ENCODE measurements at regions of chr10 and their contacts with region 1.

Region 1: DNA sequence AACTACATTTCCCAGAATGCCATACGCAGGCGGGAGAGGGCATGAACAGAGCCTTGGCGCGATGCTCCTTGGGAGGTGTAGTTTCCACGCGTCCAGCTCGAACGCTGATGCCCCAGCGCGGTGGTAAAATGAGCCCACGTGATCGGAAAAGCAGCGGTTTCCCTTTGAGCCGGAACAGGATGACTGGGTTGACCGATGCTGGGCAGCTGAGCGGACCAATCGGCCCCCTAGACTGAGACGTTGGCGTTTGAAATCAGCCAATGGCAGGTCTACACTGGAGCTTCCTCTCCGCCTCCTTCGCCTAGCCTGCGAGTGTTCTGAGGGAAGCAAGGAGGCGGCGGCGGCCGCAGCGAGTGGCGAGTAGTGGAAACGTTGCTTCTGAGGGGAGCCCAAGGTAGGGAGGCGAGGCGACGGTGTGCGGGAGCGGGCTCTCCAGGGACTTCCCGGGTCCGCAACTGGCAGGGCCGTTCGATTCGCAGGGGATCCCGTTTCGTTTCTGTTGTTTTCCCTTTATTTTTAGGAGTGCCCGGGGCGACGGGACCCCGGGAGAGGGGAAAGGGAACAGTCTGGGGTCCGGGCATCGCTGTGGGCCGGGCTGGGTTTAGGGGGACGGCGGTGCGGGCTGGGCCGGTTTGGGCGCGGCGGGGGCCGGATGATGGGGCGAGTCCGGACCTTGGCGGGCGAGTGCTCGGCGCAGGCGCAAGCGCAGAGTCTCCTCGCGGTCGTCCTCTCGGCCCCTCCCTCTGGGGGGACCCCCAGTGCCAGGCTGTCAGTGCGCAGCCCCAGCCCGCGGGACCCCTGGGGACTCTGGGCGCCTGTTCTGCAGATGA is at the start of gene BUB3:
- DNase-seq: peak; percentile 85 to 99 (median 94)
- ATAC-seq: peak; percentile 87
- H3K4me3 ChIP-seq: peak within 1 kb of the TSS; percentile 81 to 98
- H3K4me3 Mint-ChIP-seq: peak within 1 kb of the TSS; percentile 100
- H3K27ac ChIP-seq: peak within 1 kb of the TSS; percentile 74 to 91
- H3K27ac Mint-ChIP-seq: peak within 1 kb of the TSS; percentile 99
- H3K4me1 ChIP-seq: peaks cover 71% of the 10 kb centered on the region
- H3K4me1 Mint-ChIP-seq: peaks cover 73% of the 10 kb centered on the region
- H3K27me3 ChIP-seq: peaks cover 7 to 22% of the 10 kb centered on the region in 2 experiments
- H3K27me3 Mint-ChIP-seq: peaks cover 11% of the 10 kb centered on the region
- CTCF ChIP-seq: no peak
- total RNA-seq, gene BUB3: 166 to 167 TPM

Region 2: GRCh38 chr10:122374237-122374869 is 780.0 kb before region 1 on chr10 and contains the start of gene PLEKHA1:
- CTCF ChIA-PET with region 1: no interaction called
- POLR2A ChIA-PET with region 1: no interaction called
- intact Hi-C with region 1: loop called (anchors 5 kb)
- DNase-seq: peak; percentile 88 to 96 (median 92)
- ATAC-seq: peak; percentile 89
- H3K4me3 ChIP-seq: peak within 1 kb of the TSS; percentile 93 to 96
- H3K4me3 Mint-ChIP-seq: peak within 1 kb of the TSS; percentile 93
- H3K27ac ChIP-seq: peak within 1 kb of the TSS; percentile 80 to 92
- H3K27ac Mint-ChIP-seq: peak within 1 kb of the TSS; percentile 96
- H3K4me1 ChIP-seq: peaks cover 24% of the 10 kb centered on the region
- H3K4me1 Mint-ChIP-seq: peaks cover 35% of the 10 kb centered on the region
- H3K27me3 ChIP-seq: no peaks in the 10 kb centered on the region
- H3K27me3 Mint-ChIP-seq: peaks cover 2% of the 10 kb centered on the region
- CTCF ChIP-seq: no peak
- total RNA-seq, gene PLEKHA1: 23.6 to 24.6 TPM

Region 3: GRCh38 chr10:122980209-122981065 is 173.9 kb before region 1 on chr10 and contains the start of gene PSTK:
- CTCF ChIA-PET with region 1: interaction called, 4 read pairs
- POLR2A ChIA-PET with region 1: interaction called, 3 read pairs
- intact Hi-C with region 1: loop called in 1 of 2 experiments (anchors 1 kb)
- DNase-seq: peak; percentile 78 to 96 (median 86)
- ATAC-seq: peak; percentile 96
- H3K4me3 ChIP-seq: peak within 1 kb of the TSS; percentile 86 to 93
- H3K4me3 Mint-ChIP-seq: peak within 1 kb of the TSS; percentile 95
- H3K27ac ChIP-seq: peak within 1 kb of the TSS; percentile 96 to 97
- H3K27ac Mint-ChIP-seq: peak within 1 kb of the TSS; percentile 98
- H3K4me1 ChIP-seq: peaks cover 12% of the 10 kb centered on the region
- H3K4me1 Mint-ChIP-seq: peaks cover 19% of the 10 kb centered on the region
- H3K27me3 ChIP-seq: no peaks in the 10 kb centered on the region
- H3K27me3 Mint-ChIP-seq: peaks cover 4% of the 10 kb centered on the region
- CTCF ChIP-seq: peak; percentile 91
- total RNA-seq, gene PSTK: 20.5 to 20.9 TPM

Region 4: DNA sequence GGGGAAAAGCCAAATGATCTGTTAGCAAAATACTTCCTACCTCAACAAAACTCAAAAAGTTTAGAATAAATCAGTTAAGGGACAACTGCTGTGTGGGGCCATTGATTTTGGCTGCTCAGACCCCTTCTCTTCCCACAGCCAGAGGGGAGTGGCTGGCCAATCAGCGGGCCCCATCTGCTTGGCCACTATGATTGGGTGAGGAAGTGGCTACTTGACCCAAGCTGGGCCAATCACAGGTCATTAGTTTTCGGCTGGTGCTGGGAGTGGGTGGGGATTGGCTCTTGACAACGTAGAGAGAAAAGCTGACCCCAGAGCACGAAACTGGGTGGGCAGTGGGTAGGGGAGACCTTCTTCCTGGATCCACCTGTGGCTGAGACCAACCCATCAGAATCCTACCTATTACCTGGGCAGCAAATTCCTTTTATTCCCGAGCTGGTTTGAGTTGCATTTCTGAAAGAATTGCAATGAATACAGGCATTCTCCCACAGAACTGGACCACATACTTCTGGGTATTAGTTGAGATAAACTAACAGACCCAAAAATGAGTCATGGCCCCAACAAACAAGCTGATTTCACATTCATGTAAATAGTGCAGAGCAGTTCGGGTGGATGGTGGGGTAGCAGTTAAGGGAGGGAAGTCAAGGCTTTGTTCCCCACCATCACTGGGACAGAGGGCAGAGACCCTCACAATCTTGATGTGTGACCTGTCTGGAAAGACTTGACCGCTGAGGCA is 54.1 kb before region 1 on chr10:
- CTCF ChIA-PET with region 1: no interaction called
- POLR2A ChIA-PET with region 1: no interaction called
- intact Hi-C with region 1: no loop called
- DNase-seq: no peak
- ATAC-seq: no peak
- H3K4me3 ChIP-seq: no peak overlapping the region
- H3K4me3 Mint-ChIP-seq: no peak overlapping the region
- H3K27ac ChIP-seq: no peak overlapping the region
- H3K27ac Mint-ChIP-seq: no peak overlapping the region
- H3K4me1 ChIP-seq: no peaks in the 10 kb centered on the region
- H3K4me1 Mint-ChIP-seq: no peaks in the 10 kb centered on the region
- H3K27me3 ChIP-seq: no peaks in the 10 kb centered on the region
- H3K27me3 Mint-ChIP-seq: peaks cover 8% of the 10 kb centered on the region
- CTCF ChIP-seq: no peak

Region 5: DNA sequence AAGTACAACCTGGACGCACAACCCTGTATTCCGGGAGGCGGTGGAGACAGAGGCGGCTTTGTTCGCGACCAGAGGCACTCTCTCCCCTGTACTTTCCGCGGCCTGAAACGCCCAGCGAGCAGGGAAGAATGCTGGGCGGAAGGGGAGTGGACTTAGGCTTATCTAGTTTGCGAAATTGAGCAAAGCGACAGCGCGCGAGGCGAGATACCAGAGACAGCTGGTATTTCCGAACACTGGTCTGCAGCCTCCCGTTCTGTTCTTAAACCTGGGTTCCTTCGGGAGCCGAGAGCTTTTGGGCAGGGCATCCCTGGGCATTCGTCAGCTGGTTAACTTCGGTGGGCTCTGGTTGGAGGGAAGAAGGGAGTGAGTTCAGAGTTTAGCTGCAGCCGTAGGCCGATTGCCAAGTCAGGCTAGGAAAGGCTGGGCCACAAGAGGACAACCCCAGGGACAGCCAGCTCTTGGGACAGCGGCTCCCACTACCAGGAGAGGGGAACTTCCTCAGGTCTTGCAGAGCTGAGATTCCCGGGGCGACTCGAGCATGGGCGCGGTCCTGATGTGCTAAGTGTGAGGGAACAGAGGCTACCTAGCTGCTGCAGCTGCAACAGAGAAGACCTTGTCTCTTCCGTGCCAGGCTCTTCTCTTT is 14.7 kb before region 1 on chr10:
- CTCF ChIA-PET with region 1: interaction called, 14 read pairs
- POLR2A ChIA-PET with region 1: interaction called, 5 read pairs
- intact Hi-C with region 1: loop called in 1 of 2 experiments (anchors 2 kb)
- DNase-seq: no peak
- ATAC-seq: no peak
- H3K4me3 ChIP-seq: no peak overlapping the region
- H3K4me3 Mint-ChIP-seq: no peak overlapping the region
- H3K27ac ChIP-seq: no peak overlapping the region
- H3K27ac Mint-ChIP-seq: no peak overlapping the region
- H3K4me1 ChIP-seq: peaks cover 57% of the 10 kb centered on the region
- H3K4me1 Mint-ChIP-seq: peaks cover 55% of the 10 kb centered on the region
- H3K27me3 ChIP-seq: peaks cover 68 to 75% of the 10 kb centered on the region in 2 experiments
- H3K27me3 Mint-ChIP-seq: peaks cover 68% of the 10 kb centered on the region
- CTCF ChIP-seq: no peak

Region 6: GRCh38 chr10:124461438-124462347 is 1307.4 kb after region 1 on chr10 and contains the start of gene LHPP:
- CTCF ChIA-PET with region 1: no interaction called
- POLR2A ChIA-PET with region 1: no interaction called
- intact Hi-C with region 1: loop called in 1 of 2 experiments (anchors 5 kb)
- DNase-seq: peak; percentile 72 to 93 (median 86)
- ATAC-seq: peak; percentile 94
- H3K4me3 ChIP-seq: peak within 1 kb of the TSS; percentile 61 to 90
- H3K4me3 Mint-ChIP-seq: peak within 1 kb of the TSS; percentile 91
- H3K27ac ChIP-seq: peak within 1 kb of the TSS; percentile 37 to 79
- H3K27ac Mint-ChIP-seq: peak within 1 kb of the TSS; percentile 95
- H3K4me1 ChIP-seq: peaks cover 25% of the 10 kb centered on the region
- H3K4me1 Mint-ChIP-seq: peaks cover 32% of the 10 kb centered on the region
- H3K27me3 ChIP-seq: peaks cover 0 to under 1% of the 10 kb centered on the region in 2 experiments
- H3K27me3 Mint-ChIP-seq: peaks cover 4% of the 10 kb centered on the region
- CTCF ChIP-seq: peak; percentile 39
- total RNA-seq, gene LHPP: 14.4 to 17.3 TPM